Right cardiac atrium (tissue), 5 donors: ENCODE measurements at regions of chr4 and their contacts with region 1.

Region 1: GRCh38 chr4:139030614-139031235 is 15.1 kb downstream of the NOCT start:
- DNase-seq: peak in 2 of 3 donors; percentile 43 to 53
- ATAC-seq: peak; percentile 44 to 55
- H3K4me3 ChIP-seq: no peak overlapping the region
- H3K27ac ChIP-seq: no peak overlapping the region
- H3K4me1 ChIP-seq: peaks cover 3% of the 10 kb centered on the region
- H3K27me3 ChIP-seq: no peaks in the 10 kb centered on the region

Region 2: GRCh38 chr4:138910607-138911336 is 120.0 kb before region 1 on chr4:
- intact Hi-C with region 1: no loop called
- DNase-seq: peak; percentile 81 to 91 (median 90)
- ATAC-seq: peak; percentile 97 to 99
- H3K4me3 ChIP-seq: no peak overlapping the region
- H3K27ac ChIP-seq: peak overlapping the region; percentile 84
- H3K4me1 ChIP-seq: peaks cover 4% of the 10 kb centered on the region
- H3K27me3 ChIP-seq: no peaks in the 10 kb centered on the region

Region 3: DNA sequence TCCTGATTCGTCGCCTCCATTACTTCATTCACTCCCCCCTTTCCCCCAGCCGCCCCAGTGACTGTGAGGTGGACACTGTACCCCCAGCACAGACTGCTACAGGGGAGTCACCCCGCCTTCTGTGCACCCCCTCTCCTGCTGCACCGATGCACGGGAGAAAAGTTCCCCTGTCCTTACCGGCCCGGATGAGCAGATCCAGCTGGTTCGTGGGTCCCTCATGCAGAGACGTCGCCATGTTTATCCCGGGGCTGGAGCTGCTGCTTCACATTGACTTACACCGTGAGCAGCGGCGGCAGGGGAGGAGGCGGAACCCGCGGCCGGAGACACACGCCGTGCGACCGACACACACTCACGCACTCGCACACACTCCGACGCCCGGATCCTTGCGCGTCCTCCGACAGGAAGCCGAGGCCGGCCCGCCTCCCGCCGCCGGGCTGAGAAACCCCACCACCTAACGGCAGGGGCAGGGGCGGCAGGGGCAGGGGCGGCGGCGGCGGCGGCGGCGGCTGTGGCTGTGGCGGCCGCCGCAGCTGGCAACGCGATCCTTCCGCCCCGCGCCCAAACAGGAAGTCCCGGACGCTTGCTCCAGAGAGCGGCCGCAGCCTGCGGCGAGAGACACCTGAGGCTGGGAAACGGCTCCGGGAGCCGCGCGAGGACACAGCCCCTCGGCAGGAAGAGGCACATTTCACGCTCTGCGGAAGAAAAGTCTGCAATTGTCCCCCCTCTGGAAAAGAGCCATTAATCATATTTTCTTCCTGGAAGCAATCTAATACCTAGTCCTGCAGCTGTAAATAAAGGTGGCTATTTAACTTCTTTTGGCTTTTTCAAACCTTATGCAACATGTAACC is 53.5 kb after region 1 on chr4:
- intact Hi-C with region 1: loop called in 2 of 4 experiments (anchors 5 to 10 kb)
- DNase-seq: peak; percentile 89 to 96 (median 95)
- ATAC-seq: peak; percentile 86 to 87
- H3K4me3 ChIP-seq: peak overlapping the region; percentile 92
- H3K27ac ChIP-seq: peak overlapping the region; percentile 85
- H3K4me1 ChIP-seq: no peaks in the 10 kb centered on the region
- H3K27me3 ChIP-seq: no peaks in the 10 kb centered on the region

Region 4: GRCh38 chr4:139441029-139441428 is 410.3 kb after region 1 on chr4:
- intact Hi-C with region 1: no loop called
- DNase-seq: no peak
- ATAC-seq: no peak
- H3K4me3 ChIP-seq: no peak overlapping the region
- H3K27ac ChIP-seq: no peak overlapping the region
- H3K4me1 ChIP-seq: no peaks in the 10 kb centered on the region
- H3K27me3 ChIP-seq: no peaks in the 10 kb centered on the region